K562 (cell line): ENCODE measurements at regions of chr9 and their contacts with region 1.

Region 1: GRCh38 chr9:128829477-128830251 is at the start of gene SPOUT1:
- DNase-seq: peak; percentile 95 to 99 (median 98)
- ATAC-seq: peak; percentile 99
- H3K4me3 ChIP-seq: peak within 1 kb of the TSS; percentile 80
- H3K27ac ChIP-seq: peak within 1 kb of the TSS; percentile 73
- H3K4me1 ChIP-seq: peaks cover 5 to 33% of the 10 kb centered on the region in 2 experiments; a peak in 4 of 5 replicates
- H3K27me3 ChIP-seq: no peaks in the 10 kb centered on the region
- CTCF ChIP-seq: no peak
- EP300 ChIP-seq: no peak
- POLR2A ChIP-seq: peak; percentile 91
- RAD21 ChIP-seq: no peak
- polyA plus RNA-seq, gene SPOUT1: 10.6 to 13.2 TPM

Region 2: DNA sequence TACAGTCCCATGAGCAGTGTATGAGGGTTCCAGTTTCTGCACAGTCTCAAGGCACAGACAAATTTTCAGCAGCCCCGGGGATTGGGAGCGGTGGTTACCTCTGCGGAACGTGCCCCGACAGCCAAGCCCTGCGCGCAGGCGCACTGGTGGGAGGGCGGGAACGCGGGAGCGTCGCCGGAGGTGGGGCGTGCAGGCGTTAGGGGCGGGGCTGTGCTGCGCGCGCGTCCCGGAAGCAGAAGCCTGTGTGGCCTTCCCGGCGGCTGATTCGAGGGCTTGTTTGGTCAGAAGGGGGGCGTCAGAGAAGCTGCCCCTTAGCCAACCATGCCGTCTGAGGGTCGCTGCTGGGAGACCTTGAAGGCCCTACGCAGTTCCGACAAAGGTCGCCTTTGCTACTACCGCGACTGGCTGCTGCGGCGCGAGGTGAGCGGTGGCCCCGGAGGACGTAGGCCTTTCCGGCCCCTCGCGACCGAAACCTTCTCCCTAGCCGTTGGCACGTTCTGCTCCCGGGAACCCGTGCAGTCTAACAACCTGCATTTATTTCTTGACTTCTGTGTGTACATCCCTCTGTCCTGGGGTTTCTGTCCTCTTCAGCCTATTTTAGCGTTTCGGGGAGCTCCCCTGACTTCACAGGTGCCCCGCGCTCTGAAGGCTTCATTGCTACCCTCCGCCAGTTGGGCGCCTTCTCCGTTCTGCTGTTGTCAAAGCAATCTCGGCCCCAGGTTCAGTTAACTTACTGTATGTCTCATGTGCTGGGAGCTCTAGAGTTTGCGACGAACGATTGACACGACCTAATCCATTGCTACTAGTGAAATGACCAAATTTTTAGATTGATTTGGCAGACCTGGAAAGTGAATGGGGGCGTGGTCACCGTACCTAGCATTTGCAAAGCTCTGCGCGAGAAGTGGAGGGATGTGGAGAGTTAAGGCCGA is 324.9 kb before region 1 on chr9 and contains the start of gene GLE1:
- CTCF ChIA-PET with region 1: no interaction called
- POLR2A ChIA-PET with region 1: no interaction called
- in situ Hi-C with region 1: no loop called
- intact Hi-C with region 1: no loop called
- DNase-seq: peak; percentile 97 to 100 (median 98)
- ATAC-seq: peak; percentile 97
- H3K4me3 ChIP-seq: peak within 1 kb of the TSS; percentile 69
- H3K27ac ChIP-seq: peak within 1 kb of the TSS; percentile 86
- H3K4me1 ChIP-seq: peaks cover 6 to 11% of the 10 kb centered on the region in 2 experiments; a peak in 4 of 5 replicates
- H3K27me3 ChIP-seq: no peaks in the 10 kb centered on the region
- CTCF ChIP-seq: peak in 1 of 3 experiments; percentile 24; a peak in 1 of 6 replicates
- EP300 ChIP-seq: no peak
- POLR2A ChIP-seq: peak; percentile 90
- RAD21 ChIP-seq: no peak
- polyA plus RNA-seq, gene GLE1: 15.9 to 19.8 TPM

Region 3: DNA sequence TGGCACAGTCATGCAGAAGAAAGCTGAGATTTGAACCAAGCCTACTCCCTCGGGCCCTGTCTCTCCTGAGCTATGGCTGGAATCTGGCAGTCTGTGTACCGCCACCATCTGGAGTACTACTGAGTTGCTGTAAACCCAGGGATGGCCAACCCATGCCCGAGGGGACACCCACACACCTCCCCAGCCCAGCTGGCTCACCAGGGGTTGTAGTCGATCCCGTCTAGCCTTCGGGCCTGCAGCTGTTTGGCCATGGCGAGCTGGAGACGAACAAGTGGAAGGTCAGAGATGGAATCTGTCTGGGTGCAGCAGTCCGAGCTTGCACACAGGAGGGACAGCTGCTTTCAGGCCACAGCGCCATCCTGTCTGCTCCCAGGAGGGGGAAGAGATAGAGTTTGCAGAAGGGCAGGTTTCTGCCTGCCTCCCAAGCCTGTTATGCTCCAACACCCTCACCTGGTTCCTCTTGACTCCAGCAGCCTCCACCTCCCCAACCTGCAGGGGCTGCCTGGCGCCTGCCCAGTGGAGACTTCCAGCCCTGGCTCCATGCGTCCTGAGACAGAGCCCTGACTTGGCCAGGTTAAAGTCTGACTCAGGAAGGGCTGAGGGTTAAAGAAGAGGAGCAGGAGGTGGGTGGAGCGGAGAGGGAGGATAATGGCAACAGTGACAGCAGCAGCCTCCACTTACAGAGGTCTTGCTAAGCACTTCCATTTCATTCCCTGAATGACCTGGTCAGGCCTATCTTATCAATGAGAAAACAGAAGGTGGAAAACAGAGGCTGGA is 15.7 kb after region 1 on chr9:
- CTCF ChIA-PET with region 1: no interaction called
- POLR2A ChIA-PET with region 1: interaction called, 9 read pairs
- in situ Hi-C with region 1: no loop called
- intact Hi-C with region 1: loop called (anchors 1 kb)
- DNase-seq: peak; percentile 92 to 94 (median 94)
- ATAC-seq: peak; percentile 95
- H3K4me3 ChIP-seq: no peak overlapping the region; the same call in 1 of the 2 replicates
- H3K27ac ChIP-seq: peak overlapping the region; percentile 79
- H3K4me1 ChIP-seq: peaks cover 21 to 26% of the 10 kb centered on the region in 2 experiments; a peak in 4 of 5 replicates
- H3K27me3 ChIP-seq: no peaks in the 10 kb centered on the region
- CTCF ChIP-seq: peak in 2 of 3 experiments; percentile 36 to 41; a peak in 4 of 6 replicates
- EP300 ChIP-seq: peak; percentile 80
- POLR2A ChIP-seq: no peak
- RAD21 ChIP-seq: no peak